Ovary (tissue), 10 donors: ENCODE measurements at regions of chr4 and their contacts with region 1.

Region 1: GRCh38 chr4:64721106-64721505 is 311.9 kb upstream of the TECRL start:
- DNase-seq: no peak
- H3K4me3 ChIP-seq: no peak overlapping the region
- H3K27ac ChIP-seq: no peak overlapping the region
- H3K4me1 ChIP-seq: no peaks in the 10 kb centered on the region
- H3K27me3 ChIP-seq: no peaks in the 10 kb centered on the region
- CTCF ChIP-seq: no peak
- EP300 ChIP-seq: no peak
- POLR2A ChIP-seq: no peak

Region 2: DNA sequence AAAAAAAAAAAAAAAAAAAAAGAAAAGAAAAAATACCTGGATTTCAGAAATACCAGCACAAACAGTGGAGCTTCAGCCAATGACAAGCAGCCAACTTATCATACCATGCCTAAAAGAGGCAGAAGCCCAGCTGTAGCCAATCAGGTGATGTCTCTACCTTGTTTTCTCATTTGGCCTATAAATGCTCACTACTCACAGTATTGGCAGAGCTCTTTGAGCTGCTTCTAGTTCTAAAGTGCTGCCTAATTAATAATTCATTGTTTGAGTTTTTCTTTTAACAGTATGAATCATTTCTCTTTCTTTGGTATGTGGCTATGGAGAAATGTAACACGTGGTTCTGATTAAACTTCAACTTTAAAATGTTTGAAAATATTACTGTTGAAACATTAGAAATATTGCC is 123.0 kb before region 1 on chr4:
- intact Hi-C with region 1: no loop called
- DNase-seq: no peak
- H3K4me3 ChIP-seq: no peak overlapping the region
- H3K27ac ChIP-seq: no peak overlapping the region
- H3K4me1 ChIP-seq: no peaks in the 10 kb centered on the region
- H3K27me3 ChIP-seq: no peaks in the 10 kb centered on the region
- CTCF ChIP-seq: no peak
- EP300 ChIP-seq: no peak
- POLR2A ChIP-seq: no peak

Region 3: DNA sequence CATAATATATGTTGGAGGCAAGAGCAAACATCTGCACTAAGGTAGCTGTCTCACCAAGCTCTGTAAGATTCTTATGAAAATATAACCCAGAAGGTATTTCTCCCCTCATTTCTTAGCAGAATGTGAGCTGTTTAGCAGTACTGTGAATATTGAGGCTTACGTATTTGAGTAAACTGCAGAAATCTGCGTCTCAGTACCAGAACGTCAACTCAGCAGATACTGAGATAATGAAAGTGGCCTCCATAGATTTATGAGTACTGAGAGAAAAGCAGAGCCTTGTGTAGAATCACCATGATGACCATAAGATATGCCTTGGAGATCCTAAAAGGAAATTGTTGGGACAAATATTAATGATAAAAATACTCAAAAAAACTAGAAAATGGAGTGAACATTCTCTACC is 15.1 kb before region 1 on chr4:
- intact Hi-C with region 1: loop called in 1 of 4 experiments (anchors 1 kb)
- DNase-seq: no peak
- H3K4me3 ChIP-seq: no peak overlapping the region
- H3K27ac ChIP-seq: no peak overlapping the region
- H3K4me1 ChIP-seq: no peaks in the 10 kb centered on the region
- H3K27me3 ChIP-seq: no peaks in the 10 kb centered on the region
- CTCF ChIP-seq: no peak
- EP300 ChIP-seq: no peak
- POLR2A ChIP-seq: no peak